B cell (primary cell): ENCODE measurements at regions of chr1 and their contacts with region 1.

Region 1: DNA sequence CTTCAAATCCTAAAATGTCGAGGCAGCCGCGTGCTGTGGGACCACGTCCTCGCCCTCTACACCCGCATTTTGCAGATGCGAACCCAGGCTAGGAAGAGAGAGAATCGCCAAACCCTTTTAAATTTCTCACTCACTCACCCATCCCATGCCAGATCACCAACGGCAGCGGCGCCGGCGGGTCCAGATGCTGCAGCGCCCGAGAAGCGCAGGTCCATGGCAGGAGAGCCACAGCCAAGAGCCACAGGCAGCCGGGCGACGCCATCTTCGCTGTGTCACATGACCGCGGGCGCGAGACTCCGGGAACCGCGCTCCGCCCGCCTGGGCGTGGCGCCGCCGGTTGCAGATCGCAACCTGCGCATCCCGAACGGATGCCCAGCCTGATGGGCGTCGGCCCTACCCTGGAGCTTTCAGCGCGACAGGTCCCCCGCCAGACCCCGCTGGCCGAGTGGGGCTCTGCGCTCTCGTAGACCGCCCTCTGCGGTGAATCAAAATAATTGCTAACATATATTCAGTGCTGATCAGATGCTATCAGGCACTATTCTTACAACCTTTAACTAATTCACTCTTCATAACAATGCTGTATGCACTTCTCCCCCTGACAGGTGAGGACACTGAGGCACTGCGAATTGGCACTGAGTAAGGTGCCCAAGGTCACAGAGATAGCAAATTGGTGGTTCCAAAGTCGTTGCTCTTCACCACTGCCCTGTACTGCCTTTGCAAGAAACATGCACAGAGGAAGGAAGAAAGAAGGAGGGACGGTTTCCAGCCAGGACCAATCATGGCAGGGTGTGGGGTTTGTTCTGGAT is at the start of gene PPT1:
- DNase-seq: peak; percentile 86
- ATAC-seq: peak; percentile 92
- H3K4me3 ChIP-seq: peak within 1 kb of the TSS; percentile 69 to 80 (median 79)
- H3K4me3 Mint-ChIP-seq: peak within 1 kb of the TSS; percentile 88
- H3K27ac ChIP-seq: peak within 1 kb of the TSS; percentile 53 to 68
- H3K27ac Mint-ChIP-seq: peak within 1 kb of the TSS; percentile 92
- H3K4me1 ChIP-seq: peaks cover 14 to 20% of the 10 kb centered on the region in 2 donors
- H3K4me1 Mint-ChIP-seq: peaks cover 19% of the 10 kb centered on the region
- H3K27me3 ChIP-seq: no peaks in the 10 kb centered on the region
- H3K27me3 Mint-ChIP-seq: peaks cover 15% of the 10 kb centered on the region
- CTCF ChIP-seq: peak; percentile 61
- total RNA-seq, gene PPT1: 32.1 and 38.2 TPM in 2 replicates

Region 2: GRCh38 chr1:40064797-40065499 is 32.2 kb before region 1 on chr1:
- CTCF ChIA-PET with region 1: no interaction called
- POLR2A ChIA-PET with region 1: no interaction called
- intact Hi-C with region 1: loop called (anchors 2 kb)
- DNase-seq: peak; percentile 84
- ATAC-seq: peak; percentile 91
- H3K4me3 ChIP-seq: peak overlapping the region in 4 of 5 experiments; percentile 9 to 30 (median 17)
- H3K4me3 Mint-ChIP-seq: peak overlapping the region; percentile 77
- H3K27ac ChIP-seq: peak overlapping the region; percentile 77 to 87
- H3K27ac Mint-ChIP-seq: peak overlapping the region; percentile 96
- H3K4me1 ChIP-seq: peaks cover 67 to 68% of the 10 kb centered on the region in 2 donors
- H3K4me1 Mint-ChIP-seq: peaks cover 63% of the 10 kb centered on the region
- H3K27me3 ChIP-seq: no peaks in the 10 kb centered on the region
- H3K27me3 Mint-ChIP-seq: no peaks in the 10 kb centered on the region
- CTCF ChIP-seq: no peak

Region 3: GRCh38 chr1:40161125-40161887 is 64.1 kb after region 1 on chr1 and contains the start of gene RLF:
- CTCF ChIA-PET with region 1: no interaction called
- POLR2A ChIA-PET with region 1: no interaction called
- intact Hi-C with region 1: loop called (anchors 2 kb)
- DNase-seq: peak; percentile 96
- ATAC-seq: peak; percentile 97
- H3K4me3 ChIP-seq: peak within 1 kb of the TSS; percentile 93 to 97 (median 95)
- H3K4me3 Mint-ChIP-seq: peak within 1 kb of the TSS; percentile 38
- H3K27ac ChIP-seq: peak within 1 kb of the TSS; percentile 96 to 97
- H3K27ac Mint-ChIP-seq: no peak within 1 kb of the TSS
- H3K4me1 ChIP-seq: peaks cover 28 to 39% of the 10 kb centered on the region in 2 donors
- H3K4me1 Mint-ChIP-seq: peaks cover 22% of the 10 kb centered on the region
- H3K27me3 ChIP-seq: no peaks in the 10 kb centered on the region
- H3K27me3 Mint-ChIP-seq: no peaks in the 10 kb centered on the region
- CTCF ChIP-seq: no peak
- total RNA-seq, gene RLF: 21.4 and 21.9 TPM in 2 replicates